B cell (primary cell): ENCODE measurements at regions of chr13 and their contacts with region 1.

Region 1: DNA sequence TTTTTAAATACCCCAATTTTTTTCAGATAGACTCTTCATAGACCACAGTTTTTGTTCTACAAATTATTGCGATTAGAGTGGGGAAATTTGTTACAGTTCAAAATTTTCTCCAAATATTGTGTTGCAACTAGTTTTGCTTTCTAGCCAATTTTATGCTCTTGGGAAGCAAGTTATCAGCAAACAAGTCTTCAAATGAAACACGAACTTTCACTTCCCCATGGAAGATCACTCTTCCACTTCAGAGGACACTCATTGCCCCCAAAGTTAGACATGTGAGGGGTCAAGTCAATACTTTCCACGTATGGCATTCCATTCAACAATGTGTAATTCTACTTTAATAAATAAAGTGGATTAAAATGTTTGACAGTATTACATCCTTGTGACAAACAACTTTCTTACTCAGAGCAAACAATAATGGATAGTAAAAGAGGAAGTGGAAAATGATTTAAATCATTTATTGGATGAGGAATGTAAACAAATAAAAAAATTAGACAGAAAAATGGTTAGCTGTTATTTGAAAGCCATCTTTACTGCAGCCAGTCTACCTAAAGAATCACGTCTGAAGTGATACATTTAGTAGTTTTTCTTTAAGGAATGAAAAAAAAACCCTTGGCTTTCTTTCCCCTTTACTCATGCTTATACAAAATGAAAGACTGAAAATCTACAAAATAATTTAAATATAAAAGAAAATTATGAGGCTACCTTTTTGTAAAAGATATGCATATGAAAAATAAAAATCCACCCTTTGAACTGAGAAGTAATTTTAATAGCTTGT is 41.2 kb upstream of the TNFSF11 start:
- DNase-seq: peak; percentile 73
- ATAC-seq: peak; percentile 56
- H3K4me3 ChIP-seq: no peak overlapping the region
- H3K4me3 Mint-ChIP-seq: peak overlapping the region; percentile 60
- H3K27ac ChIP-seq: peak overlapping the region in 1 of 2 donors; percentile 18
- H3K27ac Mint-ChIP-seq: no peak overlapping the region
- H3K4me1 ChIP-seq: peaks cover 27 to 31% of the 10 kb centered on the region in 2 donors
- H3K4me1 Mint-ChIP-seq: peaks cover 37% of the 10 kb centered on the region
- H3K27me3 ChIP-seq: no peaks in the 10 kb centered on the region
- H3K27me3 Mint-ChIP-seq: no peaks in the 10 kb centered on the region
- CTCF ChIP-seq: no peak

Region 2: DNA sequence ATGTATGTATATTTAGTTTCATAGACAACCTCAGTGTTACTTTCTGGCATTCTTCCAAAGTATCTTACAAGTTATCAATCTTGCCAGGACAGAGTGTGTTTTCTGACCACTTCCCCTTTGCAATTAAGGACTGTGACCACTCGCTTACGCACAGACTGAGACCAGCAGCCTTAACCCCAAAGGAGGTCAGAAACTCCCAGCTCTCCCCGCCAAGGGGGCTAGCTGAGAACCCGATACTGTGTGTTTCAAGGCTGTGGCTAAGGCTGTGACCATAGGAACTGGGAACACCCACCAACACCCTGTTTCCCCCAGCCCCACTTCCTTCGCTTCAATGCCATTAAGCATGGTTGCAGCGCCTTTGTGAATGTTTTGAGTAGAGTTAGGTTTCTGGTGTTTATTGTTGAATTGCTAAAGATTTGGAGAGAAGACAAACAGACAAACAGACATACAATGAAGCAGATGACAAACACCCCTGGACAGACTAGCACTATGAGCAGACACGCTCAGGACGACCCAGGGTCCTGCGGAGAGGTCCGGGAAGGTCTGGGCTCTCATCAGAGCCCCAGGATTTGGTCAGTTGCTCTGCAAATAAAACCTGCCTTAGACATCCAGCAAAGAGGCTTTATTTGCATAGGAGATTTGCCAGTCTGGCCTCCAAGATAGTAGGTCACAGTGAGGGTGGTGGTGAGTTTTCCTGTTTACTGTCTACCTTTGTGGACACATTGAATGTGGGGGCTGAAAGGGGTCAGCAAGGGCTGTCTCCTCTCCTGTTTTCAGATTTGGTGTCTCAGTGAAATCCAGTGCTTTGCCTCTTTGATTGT is 16.2 kb after region 1 on chr13:
- CTCF ChIA-PET with region 1: no interaction called
- POLR2A ChIA-PET with region 1: no interaction called
- intact Hi-C with region 1: loop called (anchors 2 kb)
- DNase-seq: peak; percentile 60
- ATAC-seq: peak; percentile 84
- H3K4me3 ChIP-seq: no peak overlapping the region
- H3K4me3 Mint-ChIP-seq: peak overlapping the region; percentile 65
- H3K27ac ChIP-seq: no peak overlapping the region
- H3K27ac Mint-ChIP-seq: peak overlapping the region; percentile 1
- H3K4me1 ChIP-seq: peaks cover 14 to 16% of the 10 kb centered on the region in 2 donors
- H3K4me1 Mint-ChIP-seq: peaks cover 19% of the 10 kb centered on the region
- H3K27me3 ChIP-seq: no peaks in the 10 kb centered on the region
- H3K27me3 Mint-ChIP-seq: no peaks in the 10 kb centered on the region
- CTCF ChIP-seq: no peak

Region 3: GRCh38 chr13:42740753-42741152 is 208.0 kb after region 1 on chr13:
- CTCF ChIA-PET with region 1: no interaction called
- POLR2A ChIA-PET with region 1: no interaction called
- intact Hi-C with region 1: no loop called
- DNase-seq: no peak
- ATAC-seq: no peak
- H3K4me3 ChIP-seq: no peak overlapping the region
- H3K4me3 Mint-ChIP-seq: no peak overlapping the region
- H3K27ac ChIP-seq: no peak overlapping the region
- H3K27ac Mint-ChIP-seq: no peak overlapping the region
- H3K4me1 ChIP-seq: no peaks in the 10 kb centered on the region
- H3K4me1 Mint-ChIP-seq: no peaks in the 10 kb centered on the region
- H3K27me3 ChIP-seq: peaks cover 0 to 2% (median 0%) of the 10 kb centered on the region in 4 experiments
- H3K27me3 Mint-ChIP-seq: no peaks in the 10 kb centered on the region
- CTCF ChIP-seq: no peak